Left cardiac atrium (tissue), 4 donors: ENCODE measurements at regions of chr3 and their contacts with region 1.

Region 1: DNA sequence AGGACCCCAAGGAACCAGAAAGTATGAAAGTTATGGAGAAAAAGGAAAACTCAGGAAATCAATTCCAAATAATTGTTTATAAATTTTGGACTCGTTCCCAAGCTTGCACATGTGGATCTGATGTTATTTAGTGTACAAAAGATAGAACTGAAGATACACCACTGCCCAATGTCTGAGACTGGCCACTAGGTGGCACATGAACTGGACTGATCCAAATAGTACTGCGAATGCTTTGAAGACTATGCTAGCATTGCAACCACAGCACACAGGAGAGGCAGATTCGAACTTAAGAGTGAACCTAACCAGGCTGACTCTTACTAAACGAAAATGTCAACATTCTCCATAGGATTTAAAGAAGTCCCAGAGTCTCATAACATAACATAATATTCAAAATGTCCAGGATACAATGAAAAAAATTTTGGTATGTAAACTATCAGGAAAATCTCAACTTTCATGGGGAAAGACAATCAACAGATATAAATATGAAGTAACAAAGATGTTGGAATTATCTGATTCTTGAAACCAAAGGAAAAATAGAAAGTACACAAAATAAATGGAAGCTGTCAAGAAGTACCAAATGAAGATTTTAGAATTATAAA is 596.7 kb downstream of the FGF12 start:
- DNase-seq: peak; percentile 41
- ATAC-seq: peak; percentile 68 to 79

Region 2: GRCh38 chr3:191412759-191413158 is 717.9 kb before region 1 on chr3:
- intact Hi-C with region 1: loop called in 1 of 2 experiments (anchors 5 kb)
- DNase-seq: no peak
- ATAC-seq: no peak

Region 3: DNA sequence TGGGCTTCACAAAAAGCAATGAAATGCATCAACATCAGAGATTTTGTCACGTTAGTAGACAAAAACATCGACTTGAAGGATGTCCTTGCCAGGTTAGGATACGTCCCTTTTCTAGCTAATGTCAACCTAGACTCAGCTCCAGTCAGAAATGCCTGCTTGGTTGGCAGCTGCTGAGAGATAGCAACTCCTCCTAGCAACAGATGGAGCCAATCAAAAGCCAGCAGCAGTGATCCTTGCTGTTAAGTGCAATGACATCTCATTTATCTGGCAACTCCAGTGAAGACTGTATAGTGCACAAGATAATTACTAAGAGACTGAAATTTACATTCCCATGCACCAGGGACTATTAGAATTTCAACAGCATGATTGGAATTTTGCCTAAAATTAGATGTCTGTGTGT is 172.6 kb after region 1 on chr3:
- intact Hi-C with region 1: no loop called
- DNase-seq: no peak
- ATAC-seq: peak; percentile 51 to 53

Region 4: GRCh38 chr3:192423003-192423349 is 292.3 kb after region 1 on chr3:
- intact Hi-C with region 1: loop called in 1 of 2 experiments (anchors 5 kb)
- DNase-seq: no peak
- ATAC-seq: no peak

Region 5: DNA sequence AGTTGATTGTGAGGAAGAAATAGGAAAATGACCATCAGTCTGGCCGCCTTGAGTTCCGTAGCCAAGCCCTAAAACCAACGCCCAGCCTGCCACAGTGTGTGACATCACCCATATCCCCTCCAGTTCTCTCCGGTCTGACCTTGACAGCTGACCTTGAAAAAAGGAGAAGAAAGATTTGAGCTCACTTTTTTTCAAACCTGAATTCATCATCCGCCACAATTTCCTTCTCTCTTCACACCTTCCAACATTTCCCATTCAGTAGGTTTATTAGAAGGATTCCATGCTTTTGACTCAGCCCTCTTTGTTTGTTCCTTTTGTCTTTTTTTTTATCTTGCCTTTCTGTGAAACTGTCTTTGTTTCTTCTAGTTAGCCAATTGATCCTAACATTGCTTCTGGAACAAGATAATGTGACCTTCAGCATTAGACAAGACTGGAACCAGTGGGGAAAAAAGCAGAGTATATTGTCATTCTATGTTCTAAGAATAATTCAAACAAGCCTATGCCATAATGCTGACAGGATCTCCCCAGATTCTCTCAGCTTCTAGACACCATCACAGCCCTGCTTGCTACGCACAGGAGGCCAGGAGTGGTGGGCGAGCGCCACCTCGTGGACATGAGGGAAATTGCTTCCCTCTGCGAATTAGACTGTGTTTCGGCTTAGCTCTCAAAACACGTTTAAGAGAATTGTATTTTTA is 313.6 kb after region 1 on chr3:
- intact Hi-C with region 1: loop called (anchors 1 to 10 kb)
- DNase-seq: peak; percentile 55
- ATAC-seq: peak; percentile 80 to 89